ENCODE measurements at regions of chr2 and their contacts with region 1.

Region 1: DNA sequence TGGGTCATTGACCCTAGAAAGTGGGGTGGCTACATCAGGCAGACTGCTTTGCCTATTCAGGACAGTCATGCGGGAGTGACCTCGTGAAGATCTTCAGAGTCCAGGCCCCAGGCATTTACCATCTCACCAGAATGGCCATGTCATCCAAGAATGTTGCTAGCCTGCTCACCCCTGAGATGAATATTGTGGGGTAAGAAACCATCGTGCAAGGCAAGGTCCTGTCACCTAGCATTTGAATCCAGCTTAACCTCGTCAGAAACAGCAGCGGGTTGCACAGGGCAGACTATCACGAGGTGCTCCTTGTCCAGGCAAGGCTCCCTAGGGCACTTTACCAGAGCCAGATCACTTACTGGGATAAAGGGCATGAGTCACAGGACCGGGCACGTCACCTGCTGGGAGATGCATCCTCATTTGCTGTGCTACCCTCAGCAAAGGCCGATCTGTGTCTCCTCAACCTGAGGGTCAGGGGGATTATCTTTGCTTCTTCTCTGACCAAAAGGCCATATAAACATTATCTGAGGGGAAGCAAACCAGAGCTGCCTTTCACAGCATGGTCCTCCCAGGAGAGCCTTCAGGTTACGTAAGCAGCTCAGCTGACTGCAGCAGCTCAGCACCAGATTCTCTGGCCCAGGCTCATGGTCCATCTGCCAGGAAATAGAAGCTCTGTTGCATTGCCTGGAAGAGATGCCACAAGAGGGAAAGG is 162.4 kb downstream of the ACKR3 start:
- DNase-seq: peak; percentile 72 to 91 (median 87)
- ATAC-seq: peak; percentile 67 to 79 (median 74)
- H3K4me3 ChIP-seq: no peak overlapping the region
- H3K27ac ChIP-seq: peak overlapping the region; percentile 41 to 89 (median 80)
- H3K4me1 ChIP-seq: peaks cover 0 to 67% (median 26%) of the 10 kb centered on the region in 4 donors
- H3K27me3 ChIP-seq: no peaks in the 10 kb centered on the region
- CTCF ChIP-seq: no peak
- POLR2A ChIP-seq: peak; percentile 5

Region 2: DNA sequence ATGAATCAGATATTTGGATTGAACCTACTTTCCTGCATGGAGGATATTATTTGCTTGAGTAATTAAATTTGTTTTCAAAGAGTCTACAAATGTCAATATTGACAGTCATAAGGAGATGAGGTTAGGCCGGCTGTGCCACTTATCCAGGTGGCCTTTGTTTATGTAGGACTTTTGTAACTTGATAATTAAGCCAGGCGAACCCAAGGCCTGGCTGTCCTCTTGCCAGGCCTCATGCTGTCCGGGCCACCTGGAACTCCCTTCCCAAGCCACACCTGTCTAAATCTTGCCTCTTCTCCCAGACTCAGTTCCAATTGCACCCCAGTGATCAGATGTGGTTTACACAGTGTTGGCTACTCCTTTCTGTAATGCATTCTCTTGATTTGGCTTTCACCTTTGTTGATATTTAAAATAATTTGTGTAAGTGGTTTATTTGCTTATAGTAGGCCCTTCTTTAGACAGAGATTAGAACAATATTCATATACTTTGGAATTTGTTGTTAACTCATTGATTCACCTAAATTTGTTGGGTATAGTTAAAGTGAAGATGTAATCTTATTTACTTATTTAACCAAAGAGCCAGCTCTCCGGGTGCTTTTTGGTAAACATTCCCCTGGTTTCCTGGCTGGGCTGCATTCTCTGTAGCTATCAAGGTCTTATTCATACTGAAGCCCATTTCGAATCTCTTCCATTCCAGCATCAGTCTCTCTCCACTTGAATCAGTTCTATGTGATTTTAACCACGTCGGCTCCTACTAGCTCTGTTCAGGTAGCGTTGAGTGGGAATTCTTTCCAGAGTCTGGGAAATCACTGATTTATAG is 93.1 kb after region 1 on chr2:
- intact Hi-C with region 1: loop called in 1 of 2 experiments (anchors 10 kb)
- DNase-seq: peak in 2 of 3 donors; percentile 68 to 74
- ATAC-seq: peak; percentile 49 to 63 (median 58)
- H3K4me3 ChIP-seq: no peak overlapping the region
- H3K27ac ChIP-seq: peak overlapping the region in 2 of 3 donors; percentile 8 to 15
- H3K4me1 ChIP-seq: peaks cover 0 to 47% (median 23%) of the 10 kb centered on the region in 4 donors
- H3K27me3 ChIP-seq: no peaks in the 10 kb centered on the region
- CTCF ChIP-seq: no peak
- POLR2A ChIP-seq: no peak